ENCODE measurements at regions of chr17 and their contacts with region 1.

Region 1: GRCh38 chr17:1365445-1366039 is 34.5 kb downstream of the YWHAE start:
- DNase-seq: peak; percentile 86
- H3K4me3 ChIP-seq: no peak overlapping the region
- H3K27ac ChIP-seq: no peak overlapping the region
- H3K4me1 ChIP-seq: peaks cover 28% of the 10 kb centered on the region
- H3K27me3 ChIP-seq: no peaks in the 10 kb centered on the region
- CTCF ChIP-seq: peak; percentile 72 to 75
- POLR2A ChIP-seq: no peak

Region 2: DNA sequence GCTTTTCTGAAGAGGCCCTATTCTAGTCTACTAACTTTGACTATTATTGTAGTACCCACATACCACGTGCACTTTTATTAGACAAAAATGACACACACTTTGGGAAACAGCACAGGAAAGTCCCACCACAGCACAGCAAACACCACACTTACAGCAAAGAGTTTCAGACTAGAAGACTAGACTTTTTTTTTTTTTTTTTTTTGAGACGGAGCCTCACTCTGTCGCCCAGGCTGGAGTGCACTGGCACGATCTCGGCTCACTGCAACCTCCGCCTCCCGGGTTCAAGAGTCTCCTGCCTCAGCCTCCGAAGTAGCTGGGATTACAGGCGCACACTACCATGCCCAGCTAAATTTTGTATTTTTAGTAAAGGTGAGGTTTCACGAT is 14.4 kb after region 1 on chr17:
- CTCF ChIA-PET with region 1: interaction called, 106 read pairs
- POLR2A ChIA-PET with region 1: no interaction called
- dilution Hi-C with region 1: no loop called
- intact Hi-C with region 1: no loop called
- DNase-seq: no peak
- H3K4me3 ChIP-seq: no peak overlapping the region
- H3K27ac ChIP-seq: no peak overlapping the region
- H3K4me1 ChIP-seq: peaks cover 12% of the 10 kb centered on the region
- H3K27me3 ChIP-seq: no peaks in the 10 kb centered on the region
- CTCF ChIP-seq: no peak
- POLR2A ChIP-seq: no peak

Region 3: DNA sequence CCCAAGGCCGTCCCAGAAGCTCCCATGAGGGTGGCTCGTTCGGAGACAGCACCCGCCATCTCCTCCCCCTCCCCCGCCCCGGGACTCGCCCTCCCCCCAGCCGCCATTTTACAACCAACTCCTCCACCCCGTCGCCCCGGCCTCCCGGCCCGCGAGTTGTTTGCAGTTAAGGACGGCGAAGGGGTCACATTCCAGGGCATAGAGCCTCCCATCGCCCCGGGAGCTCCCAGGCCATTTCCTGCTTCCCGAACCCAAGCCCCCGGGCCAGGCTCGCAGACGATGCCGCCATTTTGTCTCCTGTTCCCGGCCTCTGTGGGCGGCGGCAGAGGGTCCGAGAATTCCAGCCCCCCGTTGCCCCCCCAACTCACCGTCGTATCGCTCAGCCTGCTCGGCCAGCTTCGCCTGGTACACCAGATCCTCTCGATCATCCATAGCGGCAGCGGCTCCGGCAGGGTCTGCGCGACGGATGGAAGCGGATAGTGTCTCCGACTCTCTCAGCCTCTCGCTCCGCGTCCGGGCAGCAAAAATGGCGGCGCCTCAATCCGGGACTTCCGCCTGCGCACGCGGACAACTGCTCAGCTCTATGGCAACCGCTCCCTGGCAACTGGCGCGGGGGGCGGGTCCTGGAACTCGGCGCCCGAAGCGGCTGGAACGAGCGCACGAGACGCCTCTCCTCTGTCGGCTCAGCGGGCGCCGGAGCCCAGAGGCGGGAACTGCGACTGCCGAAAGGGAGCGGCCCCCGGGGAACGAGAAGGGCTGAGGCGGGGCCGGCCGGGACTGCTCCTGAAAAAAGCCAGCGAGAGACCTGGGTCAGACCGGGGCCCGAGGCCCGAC is 34.4 kb after region 1 on chr17 and contains the start of gene YWHAE:
- CTCF ChIA-PET with region 1: interaction called, 39 read pairs
- POLR2A ChIA-PET with region 1: interaction called, 5 read pairs
- dilution Hi-C with region 1: no loop called
- intact Hi-C with region 1: loop called (anchors 2 kb)
- DNase-seq: peak; percentile 96
- H3K4me3 ChIP-seq: peak within 1 kb of the TSS; percentile 53 to 99 (median 77)
- H3K27ac ChIP-seq: peak within 1 kb of the TSS; percentile 86
- H3K4me1 ChIP-seq: peaks cover 17% of the 10 kb centered on the region
- H3K27me3 ChIP-seq: peaks cover 0 to under 1% of the 10 kb centered on the region in 2 experiments
- CTCF ChIP-seq: no peak
- POLR2A ChIP-seq: peak; percentile 91
- total RNA-seq, gene YWHAE: 819 and 848 TPM in 2 replicates

Region 4: DNA sequence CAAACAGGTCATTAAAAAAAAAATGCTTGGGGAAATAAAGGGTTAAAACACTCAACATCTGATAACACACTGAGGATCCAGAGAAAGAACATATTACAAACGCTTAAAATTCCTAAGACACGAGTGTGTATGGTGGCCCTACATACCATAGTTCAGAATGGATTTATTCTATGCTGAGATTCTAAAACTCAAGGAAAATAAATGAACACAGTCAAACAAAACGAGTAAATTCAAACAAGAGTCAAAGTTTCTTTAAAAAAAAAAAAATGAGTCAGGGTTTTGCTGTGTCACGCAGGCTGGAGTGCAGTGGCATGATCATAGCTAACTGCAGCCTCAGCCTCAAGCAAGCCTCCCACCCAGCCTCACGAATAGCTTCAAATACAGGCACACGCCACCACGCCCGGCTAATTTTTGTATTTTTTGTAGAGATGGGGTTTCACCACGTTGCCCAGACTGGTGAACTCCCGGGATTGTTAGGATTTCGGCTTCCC is 73.1 kb after region 1 on chr17:
- CTCF ChIA-PET with region 1: interaction called, 20 read pairs
- POLR2A ChIA-PET with region 1: no interaction called
- dilution Hi-C with region 1: no loop called
- intact Hi-C with region 1: no loop called
- DNase-seq: no peak
- H3K4me3 ChIP-seq: no peak overlapping the region
- H3K27ac ChIP-seq: no peak overlapping the region
- H3K4me1 ChIP-seq: no peaks in the 10 kb centered on the region
- H3K27me3 ChIP-seq: no peaks in the 10 kb centered on the region
- CTCF ChIP-seq: no peak
- POLR2A ChIP-seq: no peak

Region 5: DNA sequence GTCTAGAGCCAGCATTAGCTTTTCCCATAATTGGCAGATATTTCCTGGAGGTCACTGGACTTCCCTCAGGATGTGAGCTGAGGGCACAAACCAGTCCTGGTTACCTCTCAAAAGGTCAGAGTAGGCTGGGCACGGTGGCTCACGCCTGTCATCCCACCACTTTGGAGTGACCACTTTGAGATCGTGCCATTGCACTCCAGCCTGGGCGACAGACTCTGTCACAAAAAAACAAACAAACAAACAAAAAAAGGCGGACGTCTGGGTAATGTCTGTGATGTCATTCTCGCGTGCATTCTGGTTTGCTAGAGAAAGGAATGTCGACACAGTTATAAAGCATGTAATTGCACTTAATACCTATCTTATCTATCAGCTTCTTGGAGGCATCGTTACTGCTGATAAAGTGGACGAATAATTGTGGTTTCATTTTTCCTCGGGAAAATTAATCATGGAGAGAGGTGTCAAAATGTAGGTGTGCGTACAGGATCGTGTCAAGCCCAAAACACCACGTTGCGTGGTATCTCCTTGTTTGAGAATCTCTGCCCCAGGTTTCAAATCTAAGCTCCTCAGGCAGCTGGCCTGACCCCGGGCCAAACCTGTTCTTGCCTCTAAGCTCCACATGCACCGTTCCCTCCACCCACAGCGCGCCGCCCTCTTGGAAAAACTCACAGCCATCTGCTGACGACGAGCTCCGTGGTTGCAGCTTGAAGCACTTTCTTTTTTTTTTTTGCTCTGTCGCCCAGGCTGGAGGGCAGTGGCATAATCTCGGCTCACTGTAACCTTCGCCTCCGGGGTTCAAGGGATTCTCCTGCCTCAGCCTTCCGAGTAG is 97.0 kb after region 1 on chr17:
- CTCF ChIA-PET with region 1: interaction called, 18 read pairs
- POLR2A ChIA-PET with region 1: no interaction called
- dilution Hi-C with region 1: no loop called
- intact Hi-C with region 1: loop called (anchors 2 kb)
- DNase-seq: no peak
- H3K4me3 ChIP-seq: no peak overlapping the region
- H3K27ac ChIP-seq: no peak overlapping the region
- H3K4me1 ChIP-seq: peaks cover 16% of the 10 kb centered on the region
- H3K27me3 ChIP-seq: no peaks in the 10 kb centered on the region
- CTCF ChIP-seq: no peak
- POLR2A ChIP-seq: no peak

Region 6: GRCh38 chr17:1511290-1511689 is 145.7 kb after region 1 on chr17:
- CTCF ChIA-PET with region 1: interaction called, 128 read pairs
- POLR2A ChIA-PET with region 1: interaction called, 4 read pairs
- dilution Hi-C with region 1: no loop called
- intact Hi-C with region 1: loop called (anchors 1 kb)
- DNase-seq: peak; percentile 75
- H3K4me3 ChIP-seq: no peak overlapping the region
- H3K27ac ChIP-seq: peak overlapping the region; percentile 34
- H3K4me1 ChIP-seq: peaks cover 35% of the 10 kb centered on the region
- H3K27me3 ChIP-seq: no peaks in the 10 kb centered on the region
- CTCF ChIP-seq: no peak
- POLR2A ChIP-seq: peak; percentile 15

Measured in endothelial cell of umbilical vein (primary cell).